ENCODE measurements at regions of chr7 and their contacts with region 1.

Region 1: GRCh38 chr7:55977831-55978230 is 13.4 kb downstream of the NIPSNAP2 start:
- DNase-seq: no peak
- H3K4me3 ChIP-seq: no peak overlapping the region
- H3K27ac ChIP-seq: no peak overlapping the region
- H3K4me1 ChIP-seq: no peaks in the 10 kb centered on the region
- H3K27me3 ChIP-seq: no peaks in the 10 kb centered on the region
- CTCF ChIP-seq: no peak
- EP300 ChIP-seq: no peak
- POLR2A ChIP-seq: no peak

Region 2: GRCh38 chr7:55917771-55918170 is 60.1 kb before region 1 on chr7:
- intact Hi-C with region 1: no loop called
- DNase-seq: no peak
- H3K4me3 ChIP-seq: no peak overlapping the region
- H3K27ac ChIP-seq: no peak overlapping the region
- H3K4me1 ChIP-seq: no peaks in the 10 kb centered on the region
- H3K27me3 ChIP-seq: no peaks in the 10 kb centered on the region
- CTCF ChIP-seq: no peak
- EP300 ChIP-seq: no peak
- POLR2A ChIP-seq: no peak

Region 3: DNA sequence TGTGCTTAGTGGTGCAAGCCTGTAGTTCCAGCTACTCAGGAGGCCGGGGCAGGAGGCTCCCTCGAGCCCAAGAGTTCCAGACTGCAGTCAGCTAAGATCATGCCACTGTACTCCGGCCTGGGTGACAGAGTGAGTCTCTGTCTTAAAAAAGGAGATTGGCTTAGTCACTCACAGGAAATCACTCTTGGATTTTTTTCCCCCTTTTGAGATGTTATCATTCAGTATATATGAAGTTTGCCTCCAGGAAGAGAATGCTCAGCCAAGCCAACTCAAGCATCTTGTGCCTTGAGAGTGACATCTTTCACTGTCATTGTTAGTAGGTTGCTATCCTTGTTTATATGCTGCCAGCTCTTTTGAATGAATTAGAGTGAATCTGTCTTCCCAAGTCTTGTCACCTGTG is 14.5 kb after region 1 on chr7:
- intact Hi-C with region 1: no loop called
- DNase-seq: no peak
- H3K4me3 ChIP-seq: no peak overlapping the region
- H3K27ac ChIP-seq: no peak overlapping the region
- H3K4me1 ChIP-seq: no peaks in the 10 kb centered on the region
- H3K27me3 ChIP-seq: no peaks in the 10 kb centered on the region
- CTCF ChIP-seq: no peak
- EP300 ChIP-seq: no peak
- POLR2A ChIP-seq: no peak

Region 4: DNA sequence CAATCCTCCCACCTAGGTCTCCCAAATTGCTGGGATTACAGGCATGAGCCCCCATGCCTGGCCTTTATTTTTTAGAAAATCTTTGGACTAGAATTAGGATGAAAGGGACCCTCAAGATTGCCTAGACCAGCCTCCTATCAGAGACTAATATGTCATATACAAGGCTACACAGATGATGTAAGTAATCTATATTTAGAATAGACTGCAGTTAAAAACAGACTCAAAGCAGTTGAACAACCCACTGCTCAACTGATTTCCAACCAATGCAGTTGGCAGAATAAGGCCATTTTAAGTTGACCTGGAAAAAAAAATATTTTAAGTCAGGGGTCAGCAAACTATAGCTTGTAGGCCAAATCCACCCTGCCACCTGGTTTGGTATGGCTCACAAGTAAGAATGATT is 45.7 kb after region 1 on chr7:
- intact Hi-C with region 1: loop called in 1 of 4 experiments (anchors 1 kb)
- DNase-seq: no peak
- H3K4me3 ChIP-seq: no peak overlapping the region
- H3K27ac ChIP-seq: no peak overlapping the region
- H3K4me1 ChIP-seq: no peaks in the 10 kb centered on the region
- H3K27me3 ChIP-seq: no peaks in the 10 kb centered on the region
- CTCF ChIP-seq: no peak
- EP300 ChIP-seq: no peak
- POLR2A ChIP-seq: no peak

Measured in ovary (tissue), 10 donors.